ENCODE measurements at regions of chr3 and their contacts with region 1.

Region 1: DNA sequence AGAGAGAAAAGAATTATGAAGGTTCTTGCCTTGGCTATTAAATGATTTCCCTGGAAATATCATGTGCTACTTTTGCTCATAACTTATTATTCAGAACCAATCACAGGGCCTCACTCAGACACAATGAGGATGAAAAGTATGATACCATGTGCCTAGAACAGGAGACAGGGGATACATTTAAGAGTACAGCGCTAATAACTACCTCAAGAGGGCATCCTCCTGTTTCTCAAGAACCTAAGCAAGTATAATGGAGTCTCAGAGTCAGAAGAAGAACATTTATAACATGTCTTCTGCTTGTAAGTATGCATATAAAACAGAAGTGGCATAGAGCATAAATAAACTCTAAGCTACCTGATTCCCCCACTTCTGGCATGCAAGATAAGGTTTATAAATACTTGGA is 125.4 kb upstream of the MME start:
- DNase-seq: peak; percentile 29
- ATAC-seq: no peak
- H3K4me3 ChIP-seq: no peak overlapping the region
- H3K4me3 Mint-ChIP-seq: no peak overlapping the region
- H3K27ac ChIP-seq: no peak overlapping the region
- H3K27ac Mint-ChIP-seq: no peak overlapping the region
- H3K4me1 ChIP-seq: no peaks in the 10 kb centered on the region
- H3K4me1 Mint-ChIP-seq: no peaks in the 10 kb centered on the region
- H3K27me3 ChIP-seq: no peaks in the 10 kb centered on the region
- H3K27me3 Mint-ChIP-seq: no peaks in the 10 kb centered on the region
- CTCF ChIP-seq: peak; percentile 32

Region 2: DNA sequence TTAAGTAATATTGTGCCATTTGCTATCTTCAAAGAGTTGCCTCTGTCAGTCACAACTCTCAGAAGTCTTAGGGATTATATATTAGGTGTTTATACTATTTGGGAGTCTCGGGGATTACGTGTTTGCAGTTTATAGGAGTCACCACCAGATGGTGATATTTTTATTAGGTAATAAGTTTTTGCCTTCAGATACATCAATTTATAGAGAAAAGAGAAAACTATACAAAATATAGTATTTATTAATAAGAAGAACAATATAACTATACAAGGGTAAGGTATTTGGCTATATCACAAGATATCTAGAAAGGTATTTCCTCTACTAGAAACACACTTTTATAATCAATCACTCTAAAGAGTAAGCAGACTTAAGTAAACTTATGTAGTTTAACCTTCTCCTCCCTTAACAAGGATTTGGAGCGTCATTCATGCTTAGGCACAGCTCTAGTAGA is 619.8 kb before region 1 on chr3:
- CTCF ChIA-PET with region 1: no interaction called
- POLR2A ChIA-PET with region 1: no interaction called
- intact Hi-C with region 1: loop called (anchors 10 kb)
- DNase-seq: peak; percentile 52
- ATAC-seq: no peak
- H3K4me3 ChIP-seq: no peak overlapping the region
- H3K4me3 Mint-ChIP-seq: no peak overlapping the region
- H3K27ac ChIP-seq: no peak overlapping the region
- H3K27ac Mint-ChIP-seq: no peak overlapping the region
- H3K4me1 ChIP-seq: no peaks in the 10 kb centered on the region
- H3K4me1 Mint-ChIP-seq: no peaks in the 10 kb centered on the region
- H3K27me3 ChIP-seq: peaks cover 0 to 3% (median 0%) of the 10 kb centered on the region in 4 experiments
- H3K27me3 Mint-ChIP-seq: peaks cover 14% of the 10 kb centered on the region
- CTCF ChIP-seq: peak; percentile 85

Region 3: DNA sequence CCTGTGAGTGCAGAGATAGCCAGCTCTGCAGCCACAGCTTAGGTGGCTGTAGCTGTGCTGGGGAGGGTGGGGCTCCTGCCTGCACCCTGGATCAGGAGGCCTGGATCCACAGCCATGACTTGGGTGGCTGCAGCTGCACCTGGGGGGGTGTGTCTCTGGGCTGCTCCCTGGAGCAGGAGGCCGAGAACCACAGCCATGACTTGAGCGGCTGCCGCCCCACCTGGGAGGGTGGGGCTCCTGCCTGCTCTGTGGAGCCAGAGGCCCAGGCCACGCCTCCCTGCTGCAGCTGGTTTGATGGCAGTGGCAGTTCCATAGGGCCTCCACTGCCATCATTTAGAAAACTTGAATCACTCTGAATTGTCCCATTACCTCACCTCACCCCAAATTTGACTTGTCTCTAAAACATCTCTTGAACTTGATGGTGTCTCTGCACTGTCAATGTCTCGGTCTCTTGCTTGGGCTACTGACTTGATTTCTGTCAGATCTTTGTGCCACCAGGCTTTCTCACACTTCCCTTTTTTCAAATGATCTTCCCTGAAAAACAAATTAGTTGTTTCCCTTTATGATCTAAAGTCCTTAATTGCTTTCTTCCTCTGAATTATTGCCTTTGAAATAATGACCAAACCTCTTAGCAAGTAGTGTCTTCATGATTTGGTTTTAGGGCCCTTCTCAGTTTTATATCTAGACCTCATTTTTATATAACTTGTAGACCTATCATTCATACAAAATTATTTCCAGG is 187.8 kb before region 1 on chr3:
- CTCF ChIA-PET with region 1: no interaction called
- POLR2A ChIA-PET with region 1: no interaction called
- intact Hi-C with region 1: no loop called
- DNase-seq: peak; percentile 7
- ATAC-seq: no peak
- H3K4me3 ChIP-seq: no peak overlapping the region
- H3K4me3 Mint-ChIP-seq: no peak overlapping the region
- H3K27ac ChIP-seq: no peak overlapping the region
- H3K27ac Mint-ChIP-seq: no peak overlapping the region
- H3K4me1 ChIP-seq: peaks cover 7 to 11% of the 10 kb centered on the region in 2 donors
- H3K4me1 Mint-ChIP-seq: peaks cover 7% of the 10 kb centered on the region
- H3K27me3 ChIP-seq: no peaks in the 10 kb centered on the region
- H3K27me3 Mint-ChIP-seq: no peaks in the 10 kb centered on the region
- CTCF ChIP-seq: no peak

Region 4: GRCh38 chr3:155323063-155323666 is 368.4 kb after region 1 on chr3:
- CTCF ChIA-PET with region 1: interaction called, 10 read pairs
- POLR2A ChIA-PET with region 1: no interaction called
- intact Hi-C with region 1: no loop called
- DNase-seq: peak; percentile 50
- ATAC-seq: no peak
- H3K4me3 ChIP-seq: no peak overlapping the region
- H3K4me3 Mint-ChIP-seq: no peak overlapping the region
- H3K27ac ChIP-seq: no peak overlapping the region
- H3K27ac Mint-ChIP-seq: no peak overlapping the region
- H3K4me1 ChIP-seq: no peaks in the 10 kb centered on the region
- H3K4me1 Mint-ChIP-seq: no peaks in the 10 kb centered on the region
- H3K27me3 ChIP-seq: no peaks in the 10 kb centered on the region
- H3K27me3 Mint-ChIP-seq: no peaks in the 10 kb centered on the region
- CTCF ChIP-seq: peak; percentile 73